Ovary (tissue), 10 donors: ENCODE measurements at regions of chr5 and their contacts with region 1.

Region 1: DNA sequence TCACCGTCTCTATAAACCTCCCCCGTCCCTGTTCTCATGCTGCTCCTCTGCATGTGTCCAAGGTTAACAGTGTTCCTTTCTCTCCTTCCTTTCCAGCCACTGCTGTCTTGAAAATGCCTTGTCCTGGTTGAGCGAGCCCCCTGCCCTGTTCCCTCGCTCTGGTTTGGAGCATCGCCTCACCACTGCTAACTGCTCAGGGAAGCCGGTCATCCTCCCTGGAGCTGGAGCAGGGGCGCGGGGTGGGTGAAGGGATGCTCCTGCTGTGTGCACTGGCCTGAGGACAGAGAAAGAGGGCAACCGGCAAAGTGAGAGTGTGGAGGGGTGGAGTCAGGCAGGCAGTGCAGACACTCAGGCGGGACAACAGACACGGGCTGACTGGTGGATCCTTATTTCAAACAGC is 19.4 kb downstream of the UBE2QL1 start:
- DNase-seq: no peak
- H3K4me3 ChIP-seq: no peak overlapping the region
- H3K27ac ChIP-seq: no peak overlapping the region
- H3K4me1 ChIP-seq: peaks cover 2% of the 10 kb centered on the region
- H3K27me3 ChIP-seq: no peaks in the 10 kb centered on the region
- CTCF ChIP-seq: no peak
- EP300 ChIP-seq: no peak
- POLR2A ChIP-seq: no peak

Region 2: GRCh38 chr5:6220346-6221088 is 247.6 kb before region 1 on chr5:
- intact Hi-C with region 1: no loop called
- DNase-seq: no peak
- H3K4me3 ChIP-seq: no peak overlapping the region
- H3K27ac ChIP-seq: no peak overlapping the region
- H3K4me1 ChIP-seq: no peaks in the 10 kb centered on the region
- H3K27me3 ChIP-seq: no peaks in the 10 kb centered on the region
- CTCF ChIP-seq: no peak
- EP300 ChIP-seq: no peak
- POLR2A ChIP-seq: no peak

Region 3: DNA sequence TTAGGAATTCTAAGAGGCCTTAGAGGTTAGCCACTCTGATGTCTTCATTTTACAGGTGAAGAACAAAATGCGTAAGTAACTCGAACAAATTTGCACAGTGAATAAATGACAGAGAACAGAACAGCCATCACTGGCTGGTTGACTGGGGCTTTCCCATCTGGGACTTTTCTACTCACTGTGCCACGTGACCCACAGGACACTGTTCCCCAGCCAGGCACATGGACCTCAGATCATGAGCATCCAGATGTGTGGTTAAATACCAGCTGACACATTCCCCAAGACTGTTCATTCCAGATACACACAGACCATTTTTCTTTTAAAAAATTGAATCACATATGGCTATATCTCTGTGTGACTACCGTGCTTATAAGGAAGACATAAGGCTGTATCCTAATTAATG is 64.0 kb before region 1 on chr5:
- intact Hi-C with region 1: no loop called
- DNase-seq: no peak
- H3K4me3 ChIP-seq: no peak overlapping the region
- H3K27ac ChIP-seq: no peak overlapping the region
- H3K4me1 ChIP-seq: no peaks in the 10 kb centered on the region
- H3K27me3 ChIP-seq: no peaks in the 10 kb centered on the region
- CTCF ChIP-seq: no peak
- EP300 ChIP-seq: no peak
- POLR2A ChIP-seq: no peak

Region 4: DNA sequence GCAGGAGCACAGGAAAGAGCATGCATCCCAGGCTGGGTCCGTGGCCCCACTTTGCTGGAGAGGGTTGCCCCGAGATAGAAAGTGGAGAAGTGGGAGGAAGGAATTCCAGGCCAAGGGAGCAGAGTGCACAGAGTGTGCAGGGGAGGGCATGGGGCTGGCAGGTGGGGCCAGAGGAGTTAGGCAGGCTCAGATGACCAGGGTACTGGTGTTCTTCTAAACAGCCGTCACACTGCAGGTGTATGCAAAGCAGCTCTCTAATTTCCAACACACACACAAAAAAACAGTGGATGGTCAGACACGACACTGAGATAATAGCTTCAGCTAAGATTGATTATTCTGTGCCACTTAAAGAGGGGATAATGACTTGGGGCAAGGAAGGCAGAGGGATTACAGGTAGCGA is 1613.1 kb after region 1 on chr5:
- intact Hi-C with region 1: loop called in 1 of 4 experiments (anchors 5 kb)
- DNase-seq: no peak
- H3K4me3 ChIP-seq: no peak overlapping the region
- H3K27ac ChIP-seq: no peak overlapping the region
- H3K4me1 ChIP-seq: no peaks in the 10 kb centered on the region
- H3K27me3 ChIP-seq: no peaks in the 10 kb centered on the region
- CTCF ChIP-seq: no peak
- EP300 ChIP-seq: no peak
- POLR2A ChIP-seq: no peak